Activated T-helper 2 cell treated with anti-CD3 and anti-CD28 coated beads, Interferon-gamma antibody, Interleukin-2, Interleukin-4, amounts not matched to agents 10 μg/mL and 5 μg/mL and 100 μg/mL, durations not matched to agents 14 hours and 24 hours and 36 hours (primary cell): ENCODE measurements at regions of chr6 and their contacts with region 1.

Region 1: GRCh38 chr6:11711003-11711983 is 67.3 kb downstream of the ADTRP start:
- DNase-seq: no peak
- H3K4me3 Mint-ChIP-seq: peak overlapping the region; percentile 54
- H3K27ac Mint-ChIP-seq: peak overlapping the region; percentile 96
- H3K4me1 Mint-ChIP-seq: peaks cover 59% of the 10 kb centered on the region
- H3K27me3 Mint-ChIP-seq: no peaks in the 10 kb centered on the region

Region 2: GRCh38 chr6:11727998-11728961 is 17.0 kb after region 1 on chr6:
- intact Hi-C with region 1: loop called (anchors 1 kb)
- DNase-seq: no peak
- H3K4me3 Mint-ChIP-seq: peak overlapping the region; percentile 53
- H3K27ac Mint-ChIP-seq: peak overlapping the region; percentile 72
- H3K4me1 Mint-ChIP-seq: peaks cover 69% of the 10 kb centered on the region
- H3K27me3 Mint-ChIP-seq: peaks cover 4% of the 10 kb centered on the region

Region 3: GRCh38 chr6:11912426-11912825 is 201.1 kb after region 1 on chr6:
- intact Hi-C with region 1: loop called (anchors 5 kb)
- DNase-seq: no peak
- H3K4me3 Mint-ChIP-seq: no peak overlapping the region
- H3K27ac Mint-ChIP-seq: no peak overlapping the region
- H3K4me1 Mint-ChIP-seq: peaks cover 19% of the 10 kb centered on the region
- H3K27me3 Mint-ChIP-seq: no peaks in the 10 kb centered on the region

Region 4: DNA sequence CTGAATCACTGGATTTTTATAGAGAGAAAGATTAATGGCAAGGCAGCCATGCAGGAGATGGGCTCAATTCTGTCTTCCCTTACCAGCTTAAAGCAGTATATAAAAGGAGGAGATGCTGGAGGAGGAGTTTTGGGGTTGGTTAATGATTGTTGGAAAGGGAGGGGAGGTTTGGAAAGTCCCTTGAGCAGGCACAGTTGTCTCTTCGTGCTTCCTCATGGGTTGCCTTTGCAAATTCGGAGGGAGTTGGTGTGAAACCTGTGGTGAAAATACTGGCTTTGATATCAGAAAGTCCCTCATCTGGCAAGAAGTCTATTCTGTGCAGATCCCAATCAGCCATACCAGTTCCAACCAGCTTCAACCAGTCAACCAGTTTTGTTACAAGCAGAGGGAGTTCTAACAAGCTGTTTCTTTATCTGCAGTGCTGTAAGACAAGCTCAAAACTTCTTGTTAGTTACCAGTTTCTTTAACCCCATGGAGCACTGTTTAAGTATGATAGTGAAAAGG is 407.8 kb after region 1 on chr6:
- intact Hi-C with region 1: loop called (anchors 5 kb)
- DNase-seq: peak; percentile 61
- H3K4me3 Mint-ChIP-seq: peak overlapping the region; percentile 11
- H3K27ac Mint-ChIP-seq: peak overlapping the region; percentile 75
- H3K4me1 Mint-ChIP-seq: peaks cover 47% of the 10 kb centered on the region
- H3K27me3 Mint-ChIP-seq: no peaks in the 10 kb centered on the region